ENCODE measurements at regions of chr5 and their contacts with region 1.

Region 1: DNA sequence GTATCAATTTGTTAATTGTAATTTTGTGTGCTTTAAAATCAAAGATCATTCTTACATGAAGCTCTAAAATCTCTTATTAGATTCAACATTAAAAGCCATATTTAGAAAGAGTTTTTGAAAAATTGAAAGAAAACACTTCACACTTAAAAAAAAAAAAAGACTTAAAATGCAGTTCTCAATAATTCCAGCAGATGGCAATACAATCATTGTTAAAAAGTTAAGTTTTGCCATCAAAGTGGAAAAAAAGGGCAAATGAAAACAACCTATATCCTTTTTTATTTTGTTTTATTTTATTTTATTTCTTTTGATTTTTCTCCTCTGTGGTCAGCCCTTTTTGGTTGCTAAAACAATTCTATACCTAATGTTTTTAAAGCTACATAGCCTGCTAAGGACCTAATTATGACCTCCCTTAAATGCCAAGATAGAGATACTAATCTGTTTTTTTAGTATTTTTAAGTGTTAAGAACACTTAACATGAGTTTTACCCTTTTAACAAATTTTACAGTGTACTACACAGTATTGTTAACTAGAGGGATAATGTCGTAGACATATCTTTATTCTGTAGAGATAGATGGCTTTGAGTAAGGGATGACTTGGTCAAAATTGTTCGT is 154.2 kb upstream of the DAB2 start:
- DNase-seq: peak; percentile 65
- ATAC-seq: no peak
- H3K4me3 ChIP-seq: no peak overlapping the region
- H3K27ac ChIP-seq: no peak overlapping the region
- H3K4me1 ChIP-seq: 0 out of 2 replicates have a peak, but pooled peaks cover 3% of the 10 kb centered on the region
- H3K27me3 ChIP-seq: no peaks in the 10 kb centered on the region
- CTCF ChIP-seq: peak; percentile 74

Region 2: DNA sequence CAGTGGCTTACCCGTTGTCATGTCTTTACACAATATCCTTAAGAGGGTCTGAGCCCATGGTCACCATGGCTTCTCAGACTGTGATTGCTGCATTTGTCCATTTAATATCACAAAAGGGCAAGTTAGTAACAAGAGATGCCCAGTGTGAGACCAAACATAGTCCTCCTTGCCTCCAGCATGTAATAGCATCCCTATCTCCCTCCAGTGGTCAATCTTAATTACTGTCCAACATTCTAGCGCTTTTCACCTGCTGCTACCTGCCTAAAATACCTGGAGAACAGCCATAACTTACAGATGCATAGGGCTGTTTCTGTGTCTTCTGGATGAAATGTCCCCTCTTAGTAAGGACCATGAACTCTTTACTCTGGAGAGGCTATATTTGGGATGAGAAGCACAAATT is 113.0 kb after region 1 on chr5:
- CTCF ChIA-PET with region 1: no interaction called
- POLR2A ChIA-PET with region 1: no interaction called
- intact Hi-C with region 1: loop called (anchors 1 kb)
- DNase-seq: peak; percentile 70
- ATAC-seq: peak; percentile 73
- H3K4me3 ChIP-seq: no peak overlapping the region
- H3K27ac ChIP-seq: no peak overlapping the region
- H3K4me1 ChIP-seq: 0 out of 2 replicates have a peak, but pooled peaks cover under 1% of the 10 kb centered on the region
- H3K27me3 ChIP-seq: no peaks in the 10 kb centered on the region
- CTCF ChIP-seq: peak; percentile 80

Region 3: GRCh38 chr5:39760385-39761198 is 181.6 kb after region 1 on chr5:
- CTCF ChIA-PET with region 1: no interaction called
- POLR2A ChIA-PET with region 1: interaction called, 14 read pairs
- intact Hi-C with region 1: no loop called
- DNase-seq: peak; percentile 55
- ATAC-seq: peak; percentile 52; the same call in 1 of the 2 replicates
- H3K4me3 ChIP-seq: no peak overlapping the region
- H3K27ac ChIP-seq: no peak overlapping the region
- H3K4me1 ChIP-seq: peaks cover 10% of the 10 kb centered on the region
- H3K27me3 ChIP-seq: no peaks in the 10 kb centered on the region
- CTCF ChIP-seq: no peak

Region 4: GRCh38 chr5:39948867-39949468 is 370.0 kb after region 1 on chr5:
- CTCF ChIA-PET with region 1: no interaction called
- POLR2A ChIA-PET with region 1: no interaction called
- intact Hi-C with region 1: loop called (anchors 5 kb)
- DNase-seq: peak; percentile 89
- ATAC-seq: peak; percentile 81
- H3K4me3 ChIP-seq: no peak overlapping the region
- H3K27ac ChIP-seq: no peak overlapping the region
- H3K4me1 ChIP-seq: no peaks in the 10 kb centered on the region
- H3K27me3 ChIP-seq: no peaks in the 10 kb centered on the region
- CTCF ChIP-seq: peak; percentile 93

Region 5: GRCh38 chr5:40165794-40166728 is 587.1 kb after region 1 on chr5:
- CTCF ChIA-PET with region 1: interaction called, 12 read pairs
- POLR2A ChIA-PET with region 1: no interaction called
- intact Hi-C with region 1: no loop called
- DNase-seq: peak; percentile 55
- ATAC-seq: peak; percentile 66
- H3K4me3 ChIP-seq: no peak overlapping the region
- H3K27ac ChIP-seq: peak overlapping the region; percentile 32
- H3K4me1 ChIP-seq: peaks cover 17% of the 10 kb centered on the region
- H3K27me3 ChIP-seq: no peaks in the 10 kb centered on the region
- CTCF ChIP-seq: peak; percentile 46; the same call in 1 of the 2 replicates